Breast epithelium (tissue), 4 donors: ENCODE measurements at regions of chr16 and their contacts with region 1.

Region 1: GRCh38 chr16:68626557-68626956 is 18.6 kb upstream of the CDH3 start:
- DNase-seq: no peak
- H3K4me3 ChIP-seq: no peak overlapping the region
- H3K27ac ChIP-seq: no peak overlapping the region
- H3K4me1 ChIP-seq: no peaks in the 10 kb centered on the region
- H3K27me3 ChIP-seq: no peaks in the 10 kb centered on the region
- CTCF ChIP-seq: no peak
- POLR2A ChIP-seq: no peak

Region 2: GRCh38 chr16:68310429-68310760 is 316.2 kb before region 1 on chr16:
- intact Hi-C with region 1: no loop called
- DNase-seq: no peak
- H3K4me3 ChIP-seq: peak overlapping the region; percentile 78 to 99 (median 84)
- H3K27ac ChIP-seq: peak overlapping the region; percentile 84 to 85
- H3K4me1 ChIP-seq: peaks cover 0 to 12% of the 10 kb centered on the region in 2 donors
- H3K27me3 ChIP-seq: no peaks in the 10 kb centered on the region
- CTCF ChIP-seq: no peak
- POLR2A ChIP-seq: no peak

Region 3: GRCh38 chr16:68689925-68690324 is 63.4 kb after region 1 on chr16:
- intact Hi-C with region 1: loop called (anchors 2 kb)
- DNase-seq: no peak
- H3K4me3 ChIP-seq: no peak overlapping the region
- H3K27ac ChIP-seq: no peak overlapping the region
- H3K4me1 ChIP-seq: no peaks in the 10 kb centered on the region
- H3K27me3 ChIP-seq: no peaks in the 10 kb centered on the region
- CTCF ChIP-seq: no peak
- POLR2A ChIP-seq: no peak